Right ventricle myocardium superior (tissue), 1 donor: ENCODE measurements at regions of chr11 and their contacts with region 1.

Region 1: DNA sequence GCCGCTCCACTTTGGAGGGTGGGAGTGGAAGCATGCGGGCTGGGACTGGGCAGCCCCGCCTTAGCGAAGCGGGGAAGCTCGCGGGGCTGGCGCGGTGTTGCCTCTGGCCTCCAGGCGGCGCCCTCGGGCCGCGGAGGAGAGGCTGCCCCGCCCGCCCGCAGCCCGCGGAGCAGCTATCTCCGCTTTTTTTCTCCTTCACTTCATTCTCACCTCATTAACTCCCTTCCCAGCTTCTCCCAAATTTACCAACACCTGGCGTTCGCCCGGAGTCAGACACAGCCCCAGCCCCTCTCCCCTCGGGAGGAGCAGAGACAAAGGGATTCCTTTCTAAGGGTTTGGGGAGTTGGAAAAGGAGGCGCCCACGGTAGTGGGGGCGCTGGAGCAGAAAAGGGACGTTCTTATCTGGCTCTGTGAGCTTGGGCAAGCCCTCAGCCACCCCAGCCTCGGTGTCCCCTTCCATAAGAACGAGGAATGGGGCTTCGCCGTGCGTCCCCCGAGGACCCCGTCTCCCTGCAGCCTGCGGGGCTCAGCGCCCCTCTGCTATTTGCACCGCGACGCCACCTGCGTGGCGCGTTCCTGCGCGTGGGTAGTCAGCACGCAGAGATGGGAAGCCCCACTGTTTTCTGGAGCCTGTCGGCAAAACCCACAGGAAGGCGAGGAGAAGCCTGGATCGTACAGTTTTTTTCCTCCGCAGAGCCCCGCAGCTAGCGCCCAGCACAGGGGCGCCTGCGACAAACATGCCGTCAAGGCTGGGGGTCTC is 1.5 kb upstream of the WNT11 start:
- DNase-seq: peak; percentile 90
- ATAC-seq: peak; percentile 82

Region 2: DNA sequence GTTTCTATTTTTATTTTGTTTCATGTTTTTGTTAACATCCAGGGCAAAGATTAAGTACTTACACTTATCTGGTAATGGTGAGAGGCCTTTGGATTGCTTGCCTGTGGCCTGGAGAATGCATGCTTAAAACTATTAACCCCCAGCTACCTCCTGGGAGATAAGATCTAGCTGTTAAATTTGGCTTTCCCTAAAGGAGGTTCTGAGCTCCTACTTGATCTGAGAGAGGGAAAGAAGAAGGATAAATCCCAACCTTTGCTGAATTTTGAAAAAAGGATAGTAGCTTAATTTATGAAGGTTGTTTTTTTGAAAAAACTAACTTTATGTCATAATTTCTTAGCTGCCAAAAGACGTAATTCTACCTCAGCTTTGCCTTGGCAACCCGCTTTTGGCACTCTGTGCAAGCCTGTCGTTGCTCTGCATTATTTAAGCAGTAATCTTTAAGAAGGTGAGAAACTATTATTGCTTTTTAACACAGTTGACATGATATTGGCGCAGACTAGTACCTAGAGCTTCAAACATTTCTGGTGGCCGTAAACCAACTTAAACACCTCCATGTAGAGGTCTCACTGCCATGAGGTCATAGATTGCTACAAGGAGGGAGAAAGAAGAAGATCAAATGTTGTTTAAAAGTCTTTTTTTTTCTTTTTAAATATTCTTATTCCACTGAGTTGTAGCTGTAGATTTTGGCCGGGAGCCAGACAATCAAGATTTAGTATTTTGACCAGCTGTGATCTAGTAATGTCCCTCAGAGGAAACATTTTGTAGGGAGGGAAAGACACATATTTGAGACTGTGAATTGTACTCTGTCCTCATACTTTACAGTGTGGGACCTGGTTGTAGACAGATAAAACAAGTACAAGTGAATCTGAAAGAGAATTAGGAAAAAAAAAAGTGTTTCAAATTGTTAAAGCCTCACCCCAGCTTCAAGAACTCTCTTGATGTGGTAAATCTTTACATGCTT is 75.9 kb before region 1 on chr11:
- intact Hi-C with region 1: no loop called
- DNase-seq: no peak
- ATAC-seq: peak; percentile 84

Region 3: DNA sequence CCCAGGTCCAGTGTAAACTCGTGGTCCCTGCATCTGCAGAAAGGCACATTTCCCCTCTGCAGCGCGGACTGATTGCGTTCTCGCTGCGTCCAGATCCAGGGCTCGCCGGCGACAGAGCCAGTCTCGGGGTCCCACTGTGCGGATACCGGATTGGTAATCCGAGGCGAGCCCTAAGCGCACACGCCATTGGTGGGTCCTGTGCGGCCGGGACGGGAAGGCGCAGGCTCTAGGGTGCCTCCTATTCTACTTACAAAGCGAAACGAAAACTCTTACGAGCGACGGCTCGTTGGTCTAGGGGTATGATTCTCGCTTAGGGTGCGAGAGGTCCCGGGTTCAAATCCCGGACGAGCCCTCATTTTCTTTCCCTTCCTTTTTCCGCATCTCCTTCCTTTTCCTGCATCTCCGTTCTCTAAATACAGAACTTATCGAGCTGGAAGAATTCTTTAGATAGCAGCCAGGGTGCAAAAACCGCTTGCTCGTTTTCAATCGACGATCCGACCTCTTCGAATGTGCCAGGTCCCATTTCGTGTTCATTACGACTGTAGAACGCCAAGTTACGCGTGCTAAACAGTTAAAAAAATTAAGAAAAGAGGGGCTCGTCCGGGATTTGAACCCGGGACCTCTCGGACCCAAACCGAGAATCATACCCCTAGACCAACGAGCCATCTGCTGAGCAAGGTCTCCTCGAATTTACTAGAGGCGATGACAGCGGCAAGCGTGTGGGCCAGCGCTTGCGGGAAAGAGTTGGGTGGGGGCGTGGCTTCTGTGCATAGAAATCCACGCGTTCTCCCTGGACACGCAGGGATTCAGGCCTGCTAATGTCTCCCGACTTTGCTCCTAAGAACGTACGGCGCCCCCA is 27.6 kb after region 1 on chr11:
- intact Hi-C with region 1: loop called (anchors 2 kb)
- DNase-seq: peak; percentile 90
- ATAC-seq: peak; percentile 86